ENCODE measurements at regions of chr1 and their contacts with region 1.

Region 1: GRCh38 chr1:3900119-3900968 is at the start of gene C1orf174:
- DNase-seq: peak; percentile 95
- H3K4me3 ChIP-seq: peak within 1 kb of the TSS; percentile 75 to 96 (median 88)
- H3K27ac ChIP-seq: peak within 1 kb of the TSS; percentile 73
- H3K4me1 ChIP-seq: no peaks in the 10 kb centered on the region
- H3K27me3 ChIP-seq: no peaks in the 10 kb centered on the region
- CTCF ChIP-seq: no peak
- total RNA-seq, gene C1orf174: 26.8 to 30.8 TPM

Region 2: GRCh38 chr1:3856908-3857790 is 43.2 kb before region 1 on chr1 and contains the starts of genes CEP104 and DFFB:
- CTCF ChIA-PET with region 1: no interaction called
- dilution Hi-C with region 1: no loop called
- in situ Hi-C with region 1: no loop called
- intact Hi-C with region 1: loop called (anchors 1 kb)
- DNase-seq: peak; percentile 99
- H3K4me3 ChIP-seq: peak within 1 kb of the TSS; percentile 74 to 95 (median 87)
- H3K27ac ChIP-seq: peak within 1 kb of the TSS; percentile 41
- H3K4me1 ChIP-seq: peaks cover 21% of the 10 kb centered on the region
- H3K27me3 ChIP-seq: no peaks in the 10 kb centered on the region
- CTCF ChIP-seq: peak; percentile 12 to 65
- total RNA-seq, gene CEP104: 39.2 to 76.6 TPM
- total RNA-seq, gene DFFB: 3.3 to 4.8 TPM

Region 3: DNA sequence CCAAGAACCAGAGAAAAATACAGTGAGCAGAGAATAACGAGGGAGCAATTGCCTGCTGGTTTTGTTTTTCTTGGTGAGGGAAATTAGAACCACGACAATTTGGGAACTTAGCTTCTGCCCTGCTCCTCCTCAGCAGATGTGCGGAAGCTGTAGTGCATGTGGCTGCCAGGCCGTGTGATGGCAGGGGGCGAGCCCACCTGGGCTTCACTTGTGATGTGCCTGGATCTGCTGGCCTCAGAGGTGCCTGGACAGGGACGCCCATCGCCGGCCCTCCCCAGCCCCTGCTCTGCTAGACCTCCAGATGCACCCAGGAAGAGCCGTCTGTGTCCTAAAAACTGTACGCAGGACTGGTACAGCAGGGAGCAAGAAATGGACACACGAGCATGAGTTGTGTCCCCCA is 28.2 kb after region 1 on chr1:
- CTCF ChIA-PET with region 1: no interaction called
- dilution Hi-C with region 1: no loop called
- in situ Hi-C with region 1: no loop called
- intact Hi-C with region 1: no loop called
- DNase-seq: no peak
- H3K4me3 ChIP-seq: no peak overlapping the region
- H3K27ac ChIP-seq: no peak overlapping the region
- H3K4me1 ChIP-seq: no peaks in the 10 kb centered on the region
- H3K27me3 ChIP-seq: no peaks in the 10 kb centered on the region
- CTCF ChIP-seq: no peak

Region 4: GRCh38 chr1:4836574-4836973 is 936.2 kb after region 1 on chr1:
- CTCF ChIA-PET with region 1: no interaction called
- dilution Hi-C with region 1: no loop called
- in situ Hi-C with region 1: no loop called
- intact Hi-C with region 1: loop called (anchors 5 kb)
- DNase-seq: no peak
- H3K4me3 ChIP-seq: no peak overlapping the region
- H3K27ac ChIP-seq: no peak overlapping the region
- H3K4me1 ChIP-seq: peaks cover 29% of the 10 kb centered on the region
- H3K27me3 ChIP-seq: no peaks in the 10 kb centered on the region
- CTCF ChIP-seq: no peak

Region 5: DNA sequence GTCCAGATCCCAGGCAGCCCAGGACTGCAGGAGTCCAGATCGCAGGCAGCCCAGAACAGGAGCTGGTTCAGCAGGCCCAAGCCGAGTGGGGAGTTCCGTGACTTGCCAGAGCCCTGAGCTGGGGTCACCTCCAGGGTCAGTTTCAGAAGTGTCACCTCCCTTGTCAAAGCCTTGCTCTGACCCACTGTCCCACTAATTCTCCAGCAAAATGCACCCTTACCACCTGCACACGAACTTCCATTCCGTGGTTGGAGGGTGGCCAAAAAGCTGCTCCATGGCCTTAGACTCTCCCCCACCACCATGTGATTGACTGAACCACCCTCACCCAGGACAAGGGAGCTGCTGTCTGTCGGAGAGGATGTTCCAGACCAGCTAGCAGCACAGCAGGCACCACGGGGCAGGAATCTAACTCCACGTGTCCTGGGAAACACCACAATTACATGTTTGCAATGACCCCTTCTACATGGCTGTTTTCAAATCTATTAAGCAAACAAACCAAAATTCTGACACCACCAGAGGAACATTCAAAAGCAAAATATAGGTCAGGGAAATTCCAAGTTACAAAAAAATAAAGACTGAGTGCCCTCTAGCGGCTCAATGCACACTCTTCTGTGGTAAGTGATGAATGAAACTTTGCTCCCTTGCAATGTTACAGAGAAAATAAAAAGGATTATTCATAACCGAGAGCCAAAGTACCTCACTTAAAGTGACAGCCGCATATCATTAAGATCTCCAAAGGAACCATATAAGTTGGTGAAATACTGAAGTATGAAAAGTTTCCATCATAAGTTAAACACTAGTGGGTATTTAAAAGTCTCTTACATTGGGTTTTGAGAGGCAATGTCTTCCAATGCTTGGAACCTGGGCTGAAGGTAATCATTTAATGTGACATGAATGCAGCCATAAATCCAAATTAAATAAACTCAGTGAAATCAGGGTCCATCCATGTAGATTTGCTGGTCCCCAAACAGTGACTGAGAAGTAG is 2015.5 kb after region 1 on chr1:
- CTCF ChIA-PET with region 1: no interaction called
- dilution Hi-C with region 1: no loop called
- in situ Hi-C with region 1: loop called in 1 of 2 experiments (anchors 25 kb)
- intact Hi-C with region 1: no loop called
- DNase-seq: peak; percentile 58
- H3K4me3 ChIP-seq: no peak overlapping the region
- H3K27ac ChIP-seq: no peak overlapping the region
- H3K4me1 ChIP-seq: peaks cover 8% of the 10 kb centered on the region
- H3K27me3 ChIP-seq: no peaks in the 10 kb centered on the region
- CTCF ChIP-seq: peak; percentile 73 to 77